ENCODE measurements at regions of chr12 and their contacts with region 1.

Region 1: DNA sequence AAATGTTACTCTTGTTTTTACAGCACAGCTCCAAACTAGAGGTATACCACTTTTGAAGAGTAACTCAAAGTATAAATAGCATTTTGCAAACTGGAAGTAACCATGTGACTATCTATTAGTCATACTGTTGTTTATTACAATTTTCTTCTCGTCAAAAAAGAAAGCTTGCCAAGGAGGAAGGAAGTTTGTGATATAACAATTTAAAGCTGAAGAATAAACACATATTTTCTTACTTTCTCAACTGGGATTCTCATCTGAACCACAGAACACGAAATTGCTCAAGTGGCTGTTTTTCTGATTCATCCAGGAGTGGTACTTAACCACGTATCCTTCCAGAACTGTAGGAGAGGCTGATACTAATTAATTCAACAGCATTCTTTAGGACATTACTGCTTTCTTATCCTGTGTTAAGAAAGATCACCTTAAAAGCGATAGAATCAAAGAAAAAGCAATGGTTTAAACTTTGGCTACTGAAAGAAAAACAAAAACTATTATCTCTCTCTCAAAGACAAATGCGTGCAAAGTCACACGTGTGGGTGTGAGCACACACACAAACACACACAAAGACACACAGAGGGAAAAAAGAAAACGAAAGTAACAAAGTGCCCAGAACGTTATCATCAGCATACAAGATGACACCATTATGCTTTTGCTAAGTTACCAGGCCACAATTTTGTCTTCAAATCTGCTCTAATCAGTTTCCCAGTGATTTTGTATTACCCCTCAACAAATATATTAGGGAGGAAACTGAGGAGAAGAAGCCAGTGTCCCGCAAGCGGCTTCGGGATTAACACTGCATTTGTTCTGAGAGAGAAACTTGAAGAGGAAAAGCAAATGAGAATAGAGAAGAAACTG is at the start of gene CLEC2B:
- DNase-seq: peak; percentile 26
- H3K4me3 Mint-ChIP-seq: peak within 1 kb of the TSS; percentile 85
- H3K27ac Mint-ChIP-seq: peak within 1 kb of the TSS; percentile 91
- H3K4me1 Mint-ChIP-seq: peaks cover 29% of the 10 kb centered on the region
- H3K27me3 Mint-ChIP-seq: no peaks in the 10 kb centered on the region
- total RNA-seq, gene CLEC2B: 5.0 and 5.1 TPM in 2 replicates

Region 2: GRCh38 chr12:9364224-9365176 is 505.0 kb before region 1 on chr12:
- intact Hi-C with region 1: loop called (anchors 2 kb)
- DNase-seq: peak; percentile 43
- H3K4me3 Mint-ChIP-seq: peak overlapping the region; percentile 49
- H3K27ac Mint-ChIP-seq: peak overlapping the region; percentile 86
- H3K4me1 Mint-ChIP-seq: peaks cover 47% of the 10 kb centered on the region
- H3K27me3 Mint-ChIP-seq: peaks cover 51% of the 10 kb centered on the region

Region 3: DNA sequence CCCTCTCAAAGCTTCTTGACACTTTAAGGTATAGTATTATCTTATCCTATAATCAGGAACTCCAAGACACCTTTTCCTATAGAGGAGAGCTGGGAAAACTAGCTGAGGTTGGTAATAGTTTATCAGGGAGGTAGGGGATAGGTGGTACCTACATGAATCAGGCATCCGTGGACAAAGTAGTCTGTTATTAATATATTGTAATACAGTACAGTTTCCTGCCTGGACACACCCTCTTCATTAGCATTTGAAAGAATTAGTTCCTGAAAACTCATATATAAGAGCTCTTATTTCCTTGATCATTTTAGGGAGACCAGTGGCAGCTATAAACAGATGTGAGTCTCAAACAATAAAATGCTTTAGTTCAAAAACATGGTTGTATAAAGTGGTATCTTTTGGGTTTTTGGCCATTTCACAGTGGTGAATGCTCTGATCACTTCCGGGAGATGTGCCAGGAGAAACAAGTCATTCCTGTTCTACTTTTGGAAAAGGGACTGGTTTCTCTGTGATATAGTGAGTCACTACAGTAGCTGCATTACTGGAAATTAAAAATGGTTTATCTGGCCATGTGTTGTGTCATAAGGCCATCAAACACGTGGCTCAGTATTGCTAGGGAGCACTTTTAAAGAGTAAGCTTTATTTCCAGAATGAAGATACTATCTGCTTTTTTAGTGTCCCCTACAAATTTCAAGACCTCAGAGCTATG is 359.9 kb before region 1 on chr12:
- intact Hi-C with region 1: no loop called
- DNase-seq: no peak
- H3K4me3 Mint-ChIP-seq: no peak overlapping the region
- H3K27ac Mint-ChIP-seq: no peak overlapping the region
- H3K4me1 Mint-ChIP-seq: peaks cover 7% of the 10 kb centered on the region
- H3K27me3 Mint-ChIP-seq: peaks cover 2% of the 10 kb centered on the region

Region 4: DNA sequence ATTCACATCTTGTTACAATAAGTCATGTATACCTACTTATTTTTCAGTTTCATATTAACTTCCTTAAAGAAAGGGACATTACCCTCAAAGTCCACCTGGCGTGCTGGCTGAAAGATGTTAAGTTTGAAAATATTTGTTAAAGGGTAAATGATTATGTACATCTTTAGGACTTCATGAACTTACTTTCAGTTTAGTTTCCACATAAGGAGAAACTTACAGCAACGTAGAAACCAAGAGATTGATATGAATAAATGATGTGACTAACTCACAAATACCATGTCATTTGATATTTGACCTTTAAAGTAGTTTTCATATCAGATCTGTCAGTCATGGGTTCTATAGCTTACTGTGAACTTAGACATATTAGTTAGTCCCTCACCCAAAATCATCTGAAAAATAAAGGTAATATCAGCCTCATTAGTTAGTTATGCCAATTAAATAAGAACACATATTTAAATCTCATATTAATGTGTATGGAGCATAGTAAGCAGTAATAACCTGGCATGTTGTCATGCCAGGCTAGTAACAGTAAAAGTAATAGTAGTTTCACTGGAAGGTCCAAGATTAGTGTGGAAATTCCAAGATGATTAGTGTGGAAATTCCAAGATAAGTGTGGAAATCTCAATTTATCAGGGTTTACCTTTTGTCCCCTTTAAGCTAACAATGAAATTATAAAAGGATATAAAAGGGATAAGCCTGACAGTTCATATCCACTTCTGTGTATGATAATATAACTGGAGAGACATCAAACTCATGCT is 202.0 kb before region 1 on chr12:
- intact Hi-C with region 1: loop called (anchors 2 kb)
- DNase-seq: no peak
- H3K4me3 Mint-ChIP-seq: peak overlapping the region; percentile 93
- H3K27ac Mint-ChIP-seq: peak overlapping the region; percentile 97
- H3K4me1 Mint-ChIP-seq: peaks cover 45% of the 10 kb centered on the region
- H3K27me3 Mint-ChIP-seq: no peaks in the 10 kb centered on the region

Region 5: GRCh38 chr12:9711664-9712063 is 157.9 kb before region 1 on chr12:
- intact Hi-C with region 1: no loop called
- DNase-seq: no peak
- H3K4me3 Mint-ChIP-seq: no peak overlapping the region
- H3K27ac Mint-ChIP-seq: no peak overlapping the region
- H3K4me1 Mint-ChIP-seq: peaks cover 42% of the 10 kb centered on the region
- H3K27me3 Mint-ChIP-seq: no peaks in the 10 kb centered on the region

Region 6: GRCh38 chr12:9883175-9883574 is 13.6 kb after region 1 on chr12:
- intact Hi-C with region 1: no loop called
- DNase-seq: no peak
- H3K4me3 Mint-ChIP-seq: no peak overlapping the region
- H3K27ac Mint-ChIP-seq: no peak overlapping the region
- H3K4me1 Mint-ChIP-seq: peaks cover 16% of the 10 kb centered on the region
- H3K27me3 Mint-ChIP-seq: peaks cover 9% of the 10 kb centered on the region

Region 7: DNA sequence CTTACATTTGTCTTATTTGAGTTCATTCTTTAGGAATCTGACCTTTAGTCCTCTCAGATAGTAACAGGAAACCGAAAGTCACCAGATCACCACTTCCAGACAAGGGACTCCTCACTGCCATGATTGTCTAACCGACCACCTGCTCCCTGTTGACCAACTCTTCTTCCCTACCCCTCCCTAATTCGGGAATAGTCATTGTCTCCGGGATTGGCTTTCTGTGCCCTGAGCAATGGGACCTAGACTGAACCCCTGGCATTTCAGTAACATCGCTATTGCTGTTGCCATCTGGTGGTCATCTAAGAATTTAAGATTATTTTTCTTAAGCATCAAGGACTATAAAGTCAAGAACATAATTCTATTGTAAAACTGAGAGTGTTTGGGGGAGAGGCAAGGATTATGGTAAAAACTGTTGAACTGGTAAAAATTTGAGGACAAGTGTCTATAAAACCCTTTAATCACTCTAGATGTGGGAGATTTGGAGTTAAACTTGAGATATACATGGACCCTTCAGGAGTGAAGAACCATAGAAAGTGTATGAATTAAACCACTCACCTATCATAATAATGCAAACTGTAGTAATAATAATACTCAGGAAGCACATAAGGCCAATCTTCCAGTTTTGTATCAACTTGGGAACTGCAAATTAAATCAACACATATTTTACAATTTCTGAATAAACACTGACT is 56.3 kb after region 1 on chr12:
- intact Hi-C with region 1: loop called (anchors 5 kb)
- DNase-seq: no peak
- H3K4me3 Mint-ChIP-seq: peak overlapping the region; percentile 34
- H3K27ac Mint-ChIP-seq: no peak overlapping the region
- H3K4me1 Mint-ChIP-seq: peaks cover 22% of the 10 kb centered on the region
- H3K27me3 Mint-ChIP-seq: peaks cover 28% of the 10 kb centered on the region

Region 8: GRCh38 chr12:10212201-10213131 is 342.9 kb after region 1 on chr12 and contains the start of gene GABARAPL1:
- intact Hi-C with region 1: loop called (anchors 2 kb)
- DNase-seq: peak; percentile 81
- H3K4me3 Mint-ChIP-seq: peak within 1 kb of the TSS; percentile 91
- H3K27ac Mint-ChIP-seq: peak within 1 kb of the TSS; percentile 93
- H3K4me1 Mint-ChIP-seq: peaks cover 30% of the 10 kb centered on the region
- H3K27me3 Mint-ChIP-seq: peaks cover 21% of the 10 kb centered on the region
- total RNA-seq, gene GABARAPL1: 4.0 and 5.2 TPM in 2 replicates